CD4-positive, alpha-beta T cell (primary cell): ENCODE measurements at regions of chr14 and their contacts with region 1.

Region 1: DNA sequence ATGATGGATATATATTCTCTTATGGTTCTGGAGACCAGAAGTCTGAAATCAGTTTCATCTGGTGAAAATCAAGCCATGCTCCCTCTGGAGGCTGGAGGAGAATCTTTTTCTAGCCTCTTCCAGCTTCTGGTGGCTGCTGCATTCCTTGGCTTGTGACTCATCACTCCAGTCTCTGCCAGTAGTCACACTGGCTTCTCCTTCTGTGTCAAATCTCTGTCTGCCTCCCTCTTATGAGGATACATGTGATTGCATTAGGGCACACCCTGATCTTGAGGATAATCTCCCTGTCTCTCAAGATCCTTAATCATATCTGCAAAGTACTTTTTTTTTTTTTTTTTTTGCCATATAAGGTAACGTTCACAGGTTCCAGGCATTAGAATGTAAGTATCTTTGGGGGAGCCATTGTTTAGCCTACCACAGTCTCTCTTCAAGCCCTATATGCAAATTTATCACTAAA is 17.7 kb downstream of the DNAL1 start:
- DNase-seq: peak in 1 of 14 experiments; percentile 4
- ATAC-seq: no peak
- H3K4me3 ChIP-seq: no peak overlapping the region
- H3K4me3 Mint-ChIP-seq: no peak overlapping the region
- H3K27ac ChIP-seq: no peak overlapping the region
- H3K27ac Mint-ChIP-seq: no peak overlapping the region
- H3K4me1 ChIP-seq: no peaks in the 10 kb centered on the region
- H3K4me1 Mint-ChIP-seq: no peaks in the 10 kb centered on the region
- H3K27me3 ChIP-seq: no peaks in the 10 kb centered on the region
- H3K27me3 Mint-ChIP-seq: no peaks in the 10 kb centered on the region
- CTCF ChIP-seq: no peak

Region 2: DNA sequence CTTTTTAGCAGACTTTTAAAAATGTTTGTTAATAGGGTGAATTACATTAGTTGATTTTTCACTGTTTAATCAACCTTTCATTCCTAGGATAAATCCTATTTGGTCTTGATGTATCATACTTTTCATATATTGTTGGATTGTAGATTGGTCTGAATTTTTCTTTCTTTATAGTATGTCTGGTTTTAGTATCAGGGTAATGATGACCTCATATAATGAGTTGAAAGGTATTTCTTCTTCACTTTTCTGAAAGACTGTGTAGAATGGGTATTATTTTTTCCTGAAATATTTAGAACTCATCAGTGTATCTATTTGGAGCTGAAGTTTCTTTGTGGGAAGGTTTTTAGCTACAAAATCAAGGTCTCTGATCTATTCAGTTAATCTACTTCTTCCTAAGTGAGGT is 1824.8 kb before region 1 on chr14:
- CTCF ChIA-PET with region 1: no interaction called
- POLR2A ChIA-PET with region 1: no interaction called
- intact Hi-C with region 1: no loop called
- DNase-seq: no peak
- ATAC-seq: no peak
- H3K4me3 ChIP-seq: no peak overlapping the region
- H3K4me3 Mint-ChIP-seq: no peak overlapping the region
- H3K27ac ChIP-seq: no peak overlapping the region
- H3K27ac Mint-ChIP-seq: no peak overlapping the region
- H3K4me1 ChIP-seq: no peaks in the 10 kb centered on the region
- H3K4me1 Mint-ChIP-seq: no peaks in the 10 kb centered on the region
- H3K27me3 ChIP-seq: no peaks in the 10 kb centered on the region
- H3K27me3 Mint-ChIP-seq: no peaks in the 10 kb centered on the region
- CTCF ChIP-seq: no peak

Region 3: GRCh38 chr14:73623493-73624054 is 38.9 kb before region 1 on chr14:
- CTCF ChIA-PET with region 1: no interaction called
- POLR2A ChIA-PET with region 1: no interaction called
- intact Hi-C with region 1: no loop called
- DNase-seq: no peak
- ATAC-seq: no peak
- H3K4me3 ChIP-seq: no peak overlapping the region
- H3K4me3 Mint-ChIP-seq: no peak overlapping the region
- H3K27ac ChIP-seq: no peak overlapping the region
- H3K27ac Mint-ChIP-seq: no peak overlapping the region
- H3K4me1 ChIP-seq: no peaks in the 10 kb centered on the region
- H3K4me1 Mint-ChIP-seq: no peaks in the 10 kb centered on the region
- H3K27me3 ChIP-seq: no peaks in the 10 kb centered on the region
- H3K27me3 Mint-ChIP-seq: no peaks in the 10 kb centered on the region
- CTCF ChIP-seq: no peak

Region 4: DNA sequence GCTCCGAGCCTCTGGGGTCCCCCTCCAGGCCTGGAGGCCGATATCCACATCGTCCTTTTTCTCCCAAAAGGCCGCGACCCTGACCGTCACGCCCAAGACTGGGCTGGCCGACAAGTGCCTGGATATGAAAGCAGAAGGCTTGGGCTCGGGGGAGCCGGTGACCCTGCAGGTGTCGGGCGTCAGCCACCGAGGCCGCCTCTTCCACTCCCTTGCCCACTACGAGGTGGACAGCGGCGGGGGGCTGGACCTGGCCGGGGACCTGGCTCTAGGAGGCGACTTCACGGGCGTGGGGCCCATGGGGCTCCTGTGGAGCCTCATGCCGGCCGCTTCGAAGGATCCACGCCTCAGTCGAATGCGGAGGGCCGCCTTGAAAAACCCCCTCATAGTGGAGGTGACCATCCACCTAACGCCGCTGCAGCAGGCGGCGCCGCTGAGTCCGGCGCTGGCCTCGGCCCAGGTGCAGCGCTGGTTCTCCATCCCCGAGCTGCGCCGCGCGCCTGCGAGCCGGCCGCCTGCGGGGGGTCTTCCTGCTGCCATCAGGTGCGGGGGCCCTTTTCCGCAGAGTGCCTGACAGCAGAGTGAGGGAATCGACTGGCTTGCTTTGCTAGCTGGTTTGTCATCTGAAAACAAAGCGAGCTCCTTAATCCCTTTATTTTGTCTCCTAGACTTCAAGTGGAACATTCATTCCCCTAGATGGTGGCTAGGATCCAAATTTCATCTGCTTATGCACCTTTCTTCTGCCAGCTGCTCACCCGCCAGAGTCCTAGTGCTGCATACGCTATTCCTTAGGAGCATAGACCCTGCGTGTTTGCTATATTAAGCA is 28.3 kb before region 1 on chr14:
- CTCF ChIA-PET with region 1: no interaction called
- POLR2A ChIA-PET with region 1: no interaction called
- intact Hi-C with region 1: no loop called
- DNase-seq: peak in 3 of 14 experiments; percentile 10 to 34 (median 13)
- ATAC-seq: no peak
- H3K4me3 ChIP-seq: peak overlapping the region; percentile 57
- H3K4me3 Mint-ChIP-seq: peak overlapping the region; percentile 83
- H3K27ac ChIP-seq: no peak overlapping the region
- H3K27ac Mint-ChIP-seq: no peak overlapping the region
- H3K4me1 ChIP-seq: peaks cover 14% of the 10 kb centered on the region
- H3K4me1 Mint-ChIP-seq: peaks cover 5% of the 10 kb centered on the region
- H3K27me3 ChIP-seq: peaks cover 0 to 10% of the 10 kb centered on the region in 2 experiments
- H3K27me3 Mint-ChIP-seq: peaks cover 10% of the 10 kb centered on the region
- CTCF ChIP-seq: no peak

Region 5: DNA sequence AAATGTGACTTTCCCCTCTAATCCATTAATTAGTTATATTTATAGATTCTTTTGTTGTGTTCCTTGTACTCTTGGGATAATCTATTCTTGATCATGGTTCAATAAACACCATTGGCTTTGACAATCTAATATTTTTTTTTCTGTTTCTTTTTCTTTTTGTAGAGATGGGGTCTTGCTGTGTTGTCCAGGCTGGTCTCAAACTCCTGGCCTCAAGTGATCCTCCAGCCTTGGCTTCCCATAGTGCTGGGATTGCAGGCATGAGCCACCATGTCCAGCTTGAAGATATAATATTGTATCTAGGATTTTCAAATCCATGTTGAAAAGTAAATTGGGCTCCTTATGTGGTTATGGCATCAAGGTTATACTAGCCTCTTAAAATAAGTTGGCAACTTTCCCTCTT is 11.5 kb before region 1 on chr14:
- CTCF ChIA-PET with region 1: no interaction called
- POLR2A ChIA-PET with region 1: no interaction called
- intact Hi-C with region 1: no loop called
- DNase-seq: no peak
- ATAC-seq: no peak
- H3K4me3 ChIP-seq: no peak overlapping the region
- H3K4me3 Mint-ChIP-seq: no peak overlapping the region
- H3K27ac ChIP-seq: no peak overlapping the region
- H3K27ac Mint-ChIP-seq: no peak overlapping the region
- H3K4me1 ChIP-seq: no peaks in the 10 kb centered on the region
- H3K4me1 Mint-ChIP-seq: peaks cover under 1% of the 10 kb centered on the region
- H3K27me3 ChIP-seq: no peaks in the 10 kb centered on the region
- H3K27me3 Mint-ChIP-seq: no peaks in the 10 kb centered on the region
- CTCF ChIP-seq: no peak

Region 6: DNA sequence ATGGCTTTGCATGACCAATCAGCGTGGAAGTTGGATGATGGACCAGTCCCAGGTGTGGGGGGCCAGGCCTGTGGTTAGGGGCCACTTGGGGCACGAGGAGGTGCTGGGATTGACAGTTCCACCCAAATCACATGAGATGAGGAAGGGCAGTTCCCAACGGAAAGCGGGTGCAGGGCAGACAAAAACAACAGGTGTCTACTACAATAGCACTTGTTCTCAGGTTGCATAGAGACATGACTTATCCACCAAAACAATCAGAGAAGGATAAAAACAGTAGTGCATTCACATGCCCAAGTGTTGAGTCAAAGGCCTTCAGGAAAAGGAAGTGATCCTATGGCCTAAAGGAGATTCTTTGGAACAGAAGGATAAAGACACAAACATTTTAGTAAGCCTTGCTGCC is 1325.6 kb after region 1 on chr14:
- CTCF ChIA-PET with region 1: no interaction called
- POLR2A ChIA-PET with region 1: no interaction called
- intact Hi-C with region 1: loop called in 1 of 2 experiments (anchors 5 kb)
- DNase-seq: no peak
- ATAC-seq: no peak
- H3K4me3 ChIP-seq: no peak overlapping the region
- H3K4me3 Mint-ChIP-seq: no peak overlapping the region
- H3K27ac ChIP-seq: no peak overlapping the region
- H3K27ac Mint-ChIP-seq: no peak overlapping the region
- H3K4me1 ChIP-seq: no peaks in the 10 kb centered on the region
- H3K4me1 Mint-ChIP-seq: no peaks in the 10 kb centered on the region
- H3K27me3 ChIP-seq: no peaks in the 10 kb centered on the region
- H3K27me3 Mint-ChIP-seq: no peaks in the 10 kb centered on the region
- CTCF ChIP-seq: no peak